ENCODE measurements at regions of chr16 and their contacts with region 1.

Region 1: DNA sequence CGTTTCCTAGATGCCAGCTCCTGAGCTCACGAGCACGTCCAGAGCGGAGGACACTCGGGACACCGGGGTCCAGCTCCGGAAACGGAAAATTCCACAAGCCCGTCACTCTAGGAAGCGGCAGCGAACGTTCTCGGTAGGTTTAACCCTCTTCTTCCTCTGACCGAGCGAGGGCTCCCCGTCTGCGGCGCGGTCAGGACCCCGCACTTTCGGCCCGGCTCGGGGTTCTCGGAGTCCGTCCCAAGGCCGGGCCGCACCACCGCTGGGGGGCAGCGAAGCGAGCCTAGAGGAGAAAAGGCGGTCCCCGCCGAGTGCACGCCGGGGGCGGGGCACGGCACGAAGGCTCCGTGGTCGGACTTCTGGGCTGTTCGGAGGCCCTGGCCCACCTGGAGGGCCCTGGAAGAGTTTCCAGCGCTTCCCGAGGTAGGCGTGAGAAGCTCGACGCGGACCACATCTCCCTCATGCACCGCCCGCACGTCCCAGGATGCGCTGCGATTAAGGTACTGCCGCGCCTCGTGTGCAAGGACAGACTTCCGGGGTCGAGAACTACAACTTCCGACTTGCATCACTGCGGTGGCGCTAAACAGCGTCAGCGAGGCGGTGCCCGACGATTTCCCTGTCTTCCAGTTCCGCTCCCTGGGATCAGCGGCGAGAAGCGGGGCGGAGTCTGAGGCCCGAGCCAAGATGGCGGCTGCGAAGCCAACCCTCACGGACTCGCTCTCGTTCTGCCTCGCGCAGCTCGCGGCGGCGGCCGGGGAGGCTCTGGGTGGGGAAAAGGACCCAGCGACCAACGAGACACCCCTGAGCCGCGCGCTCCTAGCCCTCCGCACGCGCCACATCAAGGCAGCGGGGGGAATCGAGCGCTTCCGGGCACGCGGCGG is at the start of gene ARMC5:
- DNase-seq: peak; percentile 96
- H3K4me3 Mint-ChIP-seq: peak within 1 kb of the TSS; percentile 89
- H3K27ac Mint-ChIP-seq: peak within 1 kb of the TSS; percentile 96
- H3K4me1 Mint-ChIP-seq: peaks cover 31% of the 10 kb centered on the region
- H3K27me3 Mint-ChIP-seq: no peaks in the 10 kb centered on the region
- total RNA-seq, gene ARMC5: 10.5 and 10.6 TPM in 2 replicates

Region 2: DNA sequence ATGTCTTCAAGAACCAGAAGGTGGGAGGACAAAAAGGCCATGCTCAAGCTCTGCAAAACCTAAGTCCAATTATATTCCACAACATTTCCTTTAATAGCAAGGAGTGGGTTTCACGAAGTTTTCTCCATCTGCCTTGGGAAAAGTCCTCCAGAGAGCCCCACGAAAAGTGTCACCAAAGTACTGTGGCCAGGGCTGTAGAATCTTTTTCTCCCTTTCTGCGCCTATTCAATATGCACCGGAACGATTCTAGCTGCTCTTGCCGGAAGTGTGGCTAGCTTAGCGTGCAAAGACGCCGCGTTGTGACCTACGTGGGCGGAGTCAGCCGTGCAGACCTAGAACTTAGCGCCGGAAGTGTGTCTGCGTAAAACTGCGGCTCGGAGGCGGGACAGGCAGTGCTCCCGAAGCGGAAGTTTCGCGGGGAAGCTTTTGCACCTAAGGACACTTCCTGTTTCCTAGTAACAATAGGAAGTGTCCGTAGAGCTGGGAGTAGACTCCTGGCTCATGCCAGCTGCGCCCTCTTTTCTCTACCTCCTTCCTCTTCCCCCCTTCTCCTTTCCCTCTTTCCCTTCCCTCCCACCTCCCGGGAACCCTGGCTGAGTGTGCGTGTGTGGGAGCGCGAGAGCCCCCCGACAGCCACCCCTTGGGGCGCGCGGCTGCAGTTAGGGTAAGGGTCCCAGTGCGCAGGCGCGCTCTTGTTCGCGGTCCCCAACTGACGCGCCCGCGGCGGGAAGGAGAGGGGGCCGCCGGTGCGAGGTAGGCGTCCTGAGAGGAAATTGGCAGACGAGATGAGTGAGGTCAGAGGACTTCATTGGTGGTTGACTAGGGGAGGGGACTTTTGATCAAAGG is 384.9 kb before region 1 on chr16 and contains the starts of genes ZNF646 and ZNF668:
- intact Hi-C with region 1: loop called (anchors 1 kb)
- DNase-seq: peak; percentile 98
- H3K4me3 Mint-ChIP-seq: peak within 1 kb of the TSS; percentile 99
- H3K27ac Mint-ChIP-seq: peak within 1 kb of the TSS; percentile 96
- H3K4me1 Mint-ChIP-seq: peaks cover 23% of the 10 kb centered on the region
- H3K27me3 Mint-ChIP-seq: no peaks in the 10 kb centered on the region
- total RNA-seq, gene ZNF646: 24.4 and 24.5 TPM in 2 replicates
- total RNA-seq, gene ZNF668: 12.7 and 13.2 TPM in 2 replicates

Region 3: GRCh38 chr16:31142109-31143010 is 316.7 kb before region 1 on chr16:
- intact Hi-C with region 1: loop called (anchors 1 kb)
- DNase-seq: peak; percentile 98
- H3K4me3 Mint-ChIP-seq: peak overlapping the region; percentile 70
- H3K27ac Mint-ChIP-seq: peak overlapping the region; percentile 77
- H3K4me1 Mint-ChIP-seq: peaks cover 7% of the 10 kb centered on the region
- H3K27me3 Mint-ChIP-seq: peaks cover 7% of the 10 kb centered on the region

Region 4: DNA sequence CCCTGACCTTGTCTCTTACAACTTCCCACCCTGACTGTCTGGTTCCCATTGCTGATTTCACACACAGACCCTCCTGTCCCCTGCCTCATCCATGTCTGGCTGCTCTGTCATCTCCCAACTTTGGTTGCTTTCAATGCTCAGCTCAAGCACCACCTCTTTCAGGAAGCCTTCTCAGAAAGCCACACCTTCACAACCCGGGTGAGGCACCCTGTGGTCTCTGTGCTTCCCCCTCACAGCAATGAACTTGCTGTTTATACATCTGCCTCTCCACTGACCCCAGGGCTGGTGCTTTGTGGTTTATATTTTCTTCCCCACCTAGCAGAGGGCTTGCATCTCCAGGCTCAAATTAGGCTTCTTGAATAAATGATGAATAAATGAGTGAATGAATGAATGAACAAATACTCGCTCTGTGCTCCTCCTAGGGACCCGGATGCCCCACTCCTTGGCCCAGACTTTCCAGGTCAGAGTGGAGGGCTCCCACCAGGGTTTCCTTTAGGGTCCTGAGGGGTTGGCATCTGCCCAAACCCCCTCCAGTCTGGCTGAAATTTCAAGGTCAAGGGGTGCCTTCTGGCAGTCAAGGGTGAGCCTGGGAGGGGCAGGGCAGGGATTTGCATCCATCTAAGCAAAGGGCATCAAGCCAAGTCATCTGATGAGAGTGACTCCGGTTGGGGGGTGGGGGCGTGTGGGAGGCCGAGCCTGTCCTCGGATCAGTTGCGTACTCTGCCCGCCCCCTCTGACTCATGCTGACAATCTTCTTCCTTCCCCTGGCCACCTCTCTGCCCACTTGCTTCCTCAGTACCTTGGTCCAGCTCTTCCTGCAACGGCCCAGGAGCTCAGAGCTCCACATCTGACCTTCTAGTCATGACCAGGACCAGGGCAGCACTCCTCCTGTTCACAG is 104.4 kb before region 1 on chr16 and contains the start of gene ITGAX:
- intact Hi-C with region 1: no loop called
- DNase-seq: peak; percentile 64
- H3K4me3 Mint-ChIP-seq: peak within 1 kb of the TSS; percentile 86
- H3K27ac Mint-ChIP-seq: peak within 1 kb of the TSS; percentile 97
- H3K4me1 Mint-ChIP-seq: peaks cover 62% of the 10 kb centered on the region
- H3K27me3 Mint-ChIP-seq: no peaks in the 10 kb centered on the region
- total RNA-seq, gene ITGAX: 56.2 and 56.9 TPM in 2 replicates

Region 5: DNA sequence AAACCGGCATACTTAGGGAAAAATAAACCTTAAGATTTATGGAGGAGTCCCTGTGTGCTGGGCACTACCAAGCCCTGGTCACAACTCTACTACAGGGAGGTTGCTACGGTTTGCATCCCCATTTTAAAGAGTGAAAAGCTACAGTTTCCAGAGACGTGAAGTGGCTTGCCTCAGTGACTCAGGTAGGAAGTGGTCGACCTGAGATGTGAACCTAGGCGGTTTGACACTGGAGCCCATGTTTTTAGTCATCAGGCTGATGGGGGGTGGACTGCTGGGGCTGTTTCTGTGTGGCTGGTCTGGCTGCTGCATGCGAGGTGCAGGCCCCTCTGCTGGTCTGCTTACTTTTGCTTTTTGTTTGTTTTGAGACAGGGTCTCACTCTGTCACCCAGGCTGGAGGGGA is 37.5 kb before region 1 on chr16:
- intact Hi-C with region 1: no loop called
- DNase-seq: peak; percentile 63
- H3K4me3 Mint-ChIP-seq: peak overlapping the region; percentile 55
- H3K27ac Mint-ChIP-seq: peak overlapping the region; percentile 77
- H3K4me1 Mint-ChIP-seq: peaks cover 54% of the 10 kb centered on the region
- H3K27me3 Mint-ChIP-seq: no peaks in the 10 kb centered on the region

Region 6: GRCh38 chr16:31440516-31441184 is 18.4 kb before region 1 on chr16:
- intact Hi-C with region 1: no loop called
- DNase-seq: no peak
- H3K4me3 Mint-ChIP-seq: no peak overlapping the region
- H3K27ac Mint-ChIP-seq: no peak overlapping the region
- H3K4me1 Mint-ChIP-seq: peaks cover 25% of the 10 kb centered on the region
- H3K27me3 Mint-ChIP-seq: no peaks in the 10 kb centered on the region

Region 7: GRCh38 chr16:31476303-31477219 is 17.5 kb after region 1 on chr16:
- intact Hi-C with region 1: loop called (anchors 1 kb)
- DNase-seq: peak; percentile 72
- H3K4me3 Mint-ChIP-seq: peak overlapping the region; percentile 83
- H3K27ac Mint-ChIP-seq: no peak overlapping the region
- H3K4me1 Mint-ChIP-seq: peaks cover 15% of the 10 kb centered on the region
- H3K27me3 Mint-ChIP-seq: peaks cover 39% of the 10 kb centered on the region

Region 8: GRCh38 chr16:31528523-31529397 is 69.7 kb after region 1 on chr16:
- intact Hi-C with region 1: no loop called
- DNase-seq: no peak
- H3K4me3 Mint-ChIP-seq: no peak overlapping the region
- H3K27ac Mint-ChIP-seq: no peak overlapping the region
- H3K4me1 Mint-ChIP-seq: peaks cover 7% of the 10 kb centered on the region
- H3K27me3 Mint-ChIP-seq: peaks cover 21% of the 10 kb centered on the region

Region 9: DNA sequence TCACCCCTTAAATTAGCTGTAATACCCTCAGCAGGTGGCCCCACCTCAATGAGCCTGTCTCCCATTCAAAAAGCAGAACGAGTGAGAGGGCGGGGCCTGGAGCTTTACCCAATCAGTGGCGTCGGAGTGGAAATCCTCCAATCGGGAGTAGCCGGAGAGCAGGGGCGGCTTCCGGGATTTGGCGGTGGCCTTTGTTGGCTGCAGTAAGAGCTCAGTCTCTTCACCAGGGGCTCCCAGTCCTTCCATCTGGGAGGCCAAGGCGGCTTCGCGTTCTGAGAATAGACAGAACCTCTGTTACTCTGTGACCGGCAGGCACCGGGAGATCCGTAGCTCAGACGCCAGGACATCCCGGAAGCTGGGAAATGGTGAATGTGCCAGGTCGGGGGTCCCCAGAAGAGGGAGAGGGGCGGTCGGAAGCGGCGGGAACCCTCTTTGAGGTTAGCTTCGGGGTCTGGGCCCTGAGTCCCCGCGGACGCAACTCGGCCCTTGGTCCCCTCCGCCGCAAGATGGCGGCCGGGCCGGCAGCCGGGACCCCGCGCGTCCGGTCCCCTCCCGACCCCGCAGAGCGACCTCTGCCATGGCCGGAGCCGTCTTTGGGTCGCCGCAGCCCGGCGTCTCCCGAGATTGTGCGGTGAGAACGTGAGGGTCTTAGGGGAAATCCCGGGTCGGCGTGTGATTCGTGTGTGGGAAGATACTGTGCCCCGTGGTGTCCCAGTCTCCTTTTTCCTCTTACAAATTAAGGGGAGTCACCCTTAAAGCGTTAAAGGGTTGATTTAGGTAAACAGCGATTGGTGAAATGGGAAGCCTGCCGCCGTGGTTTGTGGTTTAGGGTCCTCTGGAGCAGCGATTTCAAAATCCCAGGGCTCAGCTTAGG is 254.2 kb after region 1 on chr16:
- intact Hi-C with region 1: loop called (anchors 2 kb)
- DNase-seq: peak; percentile 87
- H3K4me3 Mint-ChIP-seq: peak overlapping the region; percentile 98
- H3K27ac Mint-ChIP-seq: peak overlapping the region; percentile 99
- H3K4me1 Mint-ChIP-seq: peaks cover 31% of the 10 kb centered on the region
- H3K27me3 Mint-ChIP-seq: no peaks in the 10 kb centered on the region